H1 (cell line): ENCODE measurements at regions of chr22 and their contacts with region 1.

Region 1: GRCh38 chr22:20156611-20157429 is 6.0 kb upstream of the CCDC188 start:
- DNase-seq: peak; percentile 79 to 98
- H3K4me3 ChIP-seq: no peak overlapping the region
- H3K27ac ChIP-seq: no peak overlapping the region
- H3K4me1 ChIP-seq: peaks cover 0 to 7% (median 4%) of the 10 kb centered on the region in 4 experiments; a peak in 4 of 7 replicates
- H3K27me3 ChIP-seq: no peaks in the 10 kb centered on the region
- CTCF ChIP-seq: peak; percentile 97 to 99 (median 99)
- EP300 ChIP-seq: no peak
- POLR2A ChIP-seq: no peak
- RAD21 ChIP-seq: peak; percentile 100

Region 2: GRCh38 chr22:20106197-20106848 is 50.5 kb before region 1 on chr22:
- CTCF ChIA-PET with region 1: no interaction called
- POLR2A ChIA-PET with region 1: no interaction called
- DNase-seq: no peak
- H3K4me3 ChIP-seq: no peak overlapping the region
- H3K27ac ChIP-seq: no peak overlapping the region
- H3K4me1 ChIP-seq: no peaks in the 10 kb centered on the region
- H3K27me3 ChIP-seq: no peaks in the 10 kb centered on the region
- CTCF ChIP-seq: no peak
- EP300 ChIP-seq: no peak
- POLR2A ChIP-seq: no peak
- RAD21 ChIP-seq: no peak

Region 3: DNA sequence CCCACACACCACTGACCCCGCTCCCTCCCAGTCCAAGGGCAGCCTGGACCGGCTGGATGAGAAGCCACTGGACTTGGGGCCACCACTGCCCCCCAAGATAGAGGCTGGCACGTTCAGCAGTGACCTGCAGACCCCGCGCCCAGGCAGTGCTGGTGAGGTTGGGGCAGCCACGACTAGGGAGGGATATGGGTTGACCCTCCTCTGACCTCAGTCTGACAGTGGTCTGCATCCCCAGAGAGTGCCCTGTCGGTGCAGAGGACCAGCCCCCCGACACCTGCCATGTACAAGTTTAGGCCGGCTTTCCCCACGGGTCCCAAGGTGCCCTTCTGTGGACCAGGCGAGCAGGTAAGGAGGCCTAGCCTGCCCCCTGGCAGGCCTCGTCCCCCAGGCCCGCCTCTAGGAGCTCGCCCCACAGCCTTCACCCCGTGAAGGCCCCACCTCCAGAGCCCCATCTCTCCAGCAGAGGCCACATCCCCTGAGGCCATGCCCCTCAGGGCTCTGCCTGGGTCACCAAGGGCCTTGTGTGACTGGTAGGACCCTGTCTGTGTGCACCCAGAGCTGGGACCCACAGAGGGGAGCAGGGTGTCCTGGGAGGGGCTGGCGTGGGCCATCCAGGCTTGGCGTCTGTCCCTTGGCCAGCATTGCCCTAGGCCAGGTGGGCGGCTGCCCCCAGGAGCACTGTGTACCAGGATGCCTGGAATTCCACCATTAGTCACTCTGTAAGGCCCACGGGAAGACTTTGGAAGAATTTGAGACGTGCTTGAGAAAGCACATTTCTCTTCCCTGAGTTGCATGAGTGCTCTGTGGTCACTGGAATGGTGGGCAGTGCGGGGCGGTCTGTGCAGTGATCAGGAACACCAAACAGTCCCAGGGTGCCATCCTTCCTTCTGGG is 15.4 kb before region 1 on chr22:
- CTCF ChIA-PET with region 1: interaction called, 13 read pairs
- POLR2A ChIA-PET with region 1: no interaction called
- DNase-seq: no peak
- H3K4me3 ChIP-seq: no peak overlapping the region
- H3K27ac ChIP-seq: no peak overlapping the region
- H3K4me1 ChIP-seq: no peaks in the 10 kb centered on the region
- H3K27me3 ChIP-seq: no peaks in the 10 kb centered on the region
- CTCF ChIP-seq: no peak
- EP300 ChIP-seq: no peak
- POLR2A ChIP-seq: no peak
- RAD21 ChIP-seq: no peak

Region 4: DNA sequence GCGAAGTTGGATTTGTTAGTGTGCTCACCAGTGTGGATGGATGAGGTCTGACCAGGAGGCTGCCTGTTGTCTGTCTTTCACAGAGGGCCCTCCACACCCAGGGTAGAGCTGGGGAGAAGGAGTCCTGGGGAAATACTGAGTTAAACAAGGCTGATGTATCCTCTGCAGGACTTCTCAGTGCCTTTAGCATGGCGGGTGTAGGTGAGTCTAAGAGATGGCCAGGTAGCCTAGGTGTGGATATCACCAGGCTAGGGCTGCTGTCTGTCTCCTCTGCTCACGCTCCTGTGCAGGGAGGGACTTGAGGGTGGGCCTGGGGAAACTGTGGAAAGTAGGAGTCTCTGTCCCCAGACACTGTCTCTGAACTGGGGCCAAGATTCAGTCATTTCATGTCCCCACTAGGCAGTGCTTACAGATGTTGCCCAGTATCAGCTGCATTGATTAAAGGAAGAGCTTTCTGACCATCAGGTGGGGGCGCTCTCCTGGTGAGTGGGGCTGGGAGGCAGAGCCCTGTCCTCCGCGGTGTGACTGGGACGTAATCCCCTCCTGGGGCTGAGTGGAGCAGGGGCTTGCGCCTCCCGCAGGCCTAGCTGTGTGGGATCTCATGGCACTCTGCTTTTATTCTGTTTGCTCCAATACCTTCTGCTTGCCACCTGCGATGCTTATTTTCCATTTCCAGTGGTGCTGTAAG is 29.5 kb after region 1 on chr22:
- CTCF ChIA-PET with region 1: interaction called, 11 read pairs
- POLR2A ChIA-PET with region 1: no interaction called
- DNase-seq: peak; percentile 61 to 69
- H3K4me3 ChIP-seq: no peak overlapping the region
- H3K27ac ChIP-seq: no peak overlapping the region
- H3K4me1 ChIP-seq: peaks cover 0 to 4% (median 2%) of the 10 kb centered on the region in 4 experiments; a peak in 2 of 7 replicates
- H3K27me3 ChIP-seq: no peaks in the 10 kb centered on the region
- CTCF ChIP-seq: peak; percentile 54 to 73 (median 64)
- EP300 ChIP-seq: no peak
- POLR2A ChIP-seq: no peak
- RAD21 ChIP-seq: peak; percentile 20 to 53

Region 5: DNA sequence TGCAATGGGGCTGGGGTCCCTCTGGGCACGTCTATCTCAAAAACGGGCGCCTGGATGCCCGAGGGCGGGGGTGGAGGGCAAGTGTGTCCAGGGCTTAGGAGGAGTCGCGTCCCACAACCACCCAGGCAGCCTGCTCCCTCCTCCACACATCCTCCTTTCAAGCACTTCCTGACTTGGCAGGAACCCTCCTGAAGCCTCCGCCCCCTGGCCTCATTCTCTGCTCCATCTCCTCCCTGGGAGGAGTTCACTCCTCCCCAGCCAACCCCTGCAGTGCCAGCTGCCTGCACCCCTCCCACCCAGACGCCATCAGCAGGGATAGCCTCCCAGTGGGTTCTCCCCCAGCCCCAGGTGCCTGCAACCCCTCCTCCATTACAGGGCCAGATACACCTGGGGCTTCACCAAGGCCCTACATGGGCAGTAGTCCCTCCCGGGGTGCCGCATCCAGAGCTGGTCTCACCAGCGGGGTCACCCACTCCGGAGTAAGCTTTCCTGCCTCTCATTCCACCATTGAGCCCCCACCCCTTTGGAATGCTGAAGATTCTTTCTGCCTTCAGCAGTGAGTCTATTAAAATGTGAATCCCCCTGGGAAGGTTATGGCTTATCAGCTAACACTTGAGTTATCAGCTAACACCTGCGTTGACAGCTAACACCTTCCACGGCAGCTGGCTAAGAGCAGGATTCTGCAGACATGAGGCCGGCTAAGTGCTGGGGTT is 86.9 kb after region 1 on chr22:
- CTCF ChIA-PET with region 1: interaction called, 93 read pairs
- POLR2A ChIA-PET with region 1: no interaction called
- DNase-seq: no peak
- H3K4me3 ChIP-seq: no peak overlapping the region
- H3K27ac ChIP-seq: no peak overlapping the region
- H3K4me1 ChIP-seq: peaks cover 7 to 49% (median 23%) of the 10 kb centered on the region in 4 experiments
- H3K27me3 ChIP-seq: no peaks in the 10 kb centered on the region
- CTCF ChIP-seq: no peak
- EP300 ChIP-seq: no peak
- POLR2A ChIP-seq: no peak
- RAD21 ChIP-seq: no peak

Region 6: DNA sequence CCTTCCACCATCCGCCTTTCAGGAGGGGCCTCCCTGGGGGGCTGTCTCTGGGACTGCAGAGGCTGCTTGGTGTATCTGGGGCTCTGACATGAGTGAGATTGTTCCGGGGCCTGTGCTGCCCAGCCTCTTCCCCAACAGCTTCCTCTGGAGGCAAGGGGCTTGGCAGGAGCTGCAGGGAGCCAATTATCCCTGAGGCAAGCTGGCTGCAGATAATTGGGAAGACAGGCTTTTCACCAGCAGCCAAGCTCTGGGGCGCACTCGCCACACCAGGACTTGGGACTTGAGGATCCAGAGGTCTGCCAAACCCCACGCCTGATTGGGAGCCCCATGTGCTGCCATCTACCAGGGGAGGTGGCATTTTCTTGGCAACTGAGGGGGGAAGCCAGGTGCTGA is 126.8 kb after region 1 on chr22:
- CTCF ChIA-PET with region 1: interaction called, 98 read pairs
- POLR2A ChIA-PET with region 1: no interaction called
- DNase-seq: no peak
- H3K4me3 ChIP-seq: no peak overlapping the region
- H3K27ac ChIP-seq: no peak overlapping the region
- H3K4me1 ChIP-seq: no peaks in the 10 kb centered on the region
- H3K27me3 ChIP-seq: no peaks in the 10 kb centered on the region
- CTCF ChIP-seq: no peak
- EP300 ChIP-seq: no peak
- POLR2A ChIP-seq: no peak
- RAD21 ChIP-seq: no peak